B cell (primary cell): ENCODE measurements at regions of chr11 and their contacts with region 1.

Region 1: DNA sequence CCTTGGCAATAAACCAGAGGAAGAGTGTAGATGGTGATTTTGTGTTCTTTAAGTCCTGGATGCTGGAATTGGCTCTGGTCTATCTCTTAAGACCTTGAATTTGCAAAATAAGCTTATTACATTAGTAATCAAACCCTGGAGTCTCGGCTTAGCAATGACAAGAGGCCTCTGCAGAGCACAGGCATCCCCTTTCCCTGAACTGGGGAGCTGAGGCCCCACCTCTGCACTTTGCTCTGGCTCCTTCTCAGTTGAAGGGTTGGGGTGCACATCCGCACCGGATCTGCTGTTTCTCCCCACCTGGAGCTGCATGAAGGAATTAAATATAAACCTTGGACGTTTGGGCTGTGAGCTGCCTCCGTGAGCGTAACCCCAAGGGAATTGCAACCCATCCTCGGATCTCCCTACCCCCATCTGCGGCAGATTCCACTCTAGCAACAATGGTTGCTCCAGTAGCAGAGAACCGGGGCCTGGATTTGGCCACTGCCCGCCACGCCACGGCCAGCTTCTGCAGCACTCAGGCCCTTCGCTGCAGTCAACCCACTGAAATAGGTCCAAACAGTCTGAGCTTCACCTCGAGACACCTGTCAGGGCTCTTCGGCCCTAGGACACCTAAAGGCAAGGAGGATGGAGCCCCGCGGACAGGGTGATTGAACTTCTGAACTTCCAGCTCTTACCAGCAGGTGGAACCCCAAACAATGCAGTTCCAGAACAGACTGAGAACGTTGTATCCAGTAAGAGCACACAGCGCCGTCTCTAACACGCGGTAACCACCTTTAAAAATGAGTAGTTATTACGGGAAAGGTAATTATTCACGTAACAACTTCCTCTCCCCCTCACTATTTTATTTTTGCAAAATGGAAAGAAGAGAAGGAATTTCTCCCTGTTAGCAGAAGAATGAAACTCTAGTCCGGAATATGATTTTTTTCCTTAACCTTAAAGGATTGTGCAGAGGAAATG is 54.8 kb upstream of the CAPRIN1 start:
- DNase-seq: peak; percentile 85
- ATAC-seq: peak; percentile 98
- H3K4me3 ChIP-seq: no peak overlapping the region
- H3K4me3 Mint-ChIP-seq: peak overlapping the region; percentile 6
- H3K27ac ChIP-seq: no peak overlapping the region
- H3K27ac Mint-ChIP-seq: no peak overlapping the region
- H3K4me1 ChIP-seq: peaks cover 8 to 13% of the 10 kb centered on the region in 2 donors
- H3K4me1 Mint-ChIP-seq: peaks cover 13% of the 10 kb centered on the region
- H3K27me3 ChIP-seq: peaks cover 0 to 27% (median 13%) of the 10 kb centered on the region in 4 experiments
- H3K27me3 Mint-ChIP-seq: peaks cover 23% of the 10 kb centered on the region
- CTCF ChIP-seq: peak; percentile 85

Region 2: DNA sequence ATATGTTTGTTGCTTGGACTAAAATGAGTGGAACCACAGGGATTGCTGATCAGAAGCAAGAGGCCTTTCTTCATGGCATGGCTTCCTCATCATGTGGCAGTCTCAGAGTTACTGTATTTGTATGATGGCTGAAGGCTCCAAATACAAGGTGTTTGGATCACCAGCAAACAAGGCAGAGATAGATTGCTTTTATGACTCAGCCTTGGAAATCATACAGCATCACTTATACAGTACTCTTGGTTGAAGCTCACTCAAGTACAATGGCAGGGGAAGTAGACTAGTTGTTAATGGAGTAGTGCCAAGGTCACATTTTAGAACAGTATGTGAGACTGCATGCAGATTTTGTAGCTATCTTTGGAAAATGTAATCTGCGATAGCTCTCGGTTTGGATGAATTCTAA is 71.3 kb after region 1 on chr11:
- CTCF ChIA-PET with region 1: interaction called, 8 read pairs
- POLR2A ChIA-PET with region 1: no interaction called
- intact Hi-C with region 1: loop called (anchors 5 kb)
- DNase-seq: no peak
- ATAC-seq: no peak
- H3K4me3 ChIP-seq: no peak overlapping the region
- H3K4me3 Mint-ChIP-seq: peak overlapping the region; percentile 38
- H3K27ac ChIP-seq: peak overlapping the region; percentile 16 to 38
- H3K27ac Mint-ChIP-seq: peak overlapping the region; percentile 53
- H3K4me1 ChIP-seq: peaks cover 14 to 17% of the 10 kb centered on the region in 2 donors
- H3K4me1 Mint-ChIP-seq: peaks cover 51% of the 10 kb centered on the region
- H3K27me3 ChIP-seq: no peaks in the 10 kb centered on the region
- H3K27me3 Mint-ChIP-seq: no peaks in the 10 kb centered on the region
- CTCF ChIP-seq: no peak

Region 3: DNA sequence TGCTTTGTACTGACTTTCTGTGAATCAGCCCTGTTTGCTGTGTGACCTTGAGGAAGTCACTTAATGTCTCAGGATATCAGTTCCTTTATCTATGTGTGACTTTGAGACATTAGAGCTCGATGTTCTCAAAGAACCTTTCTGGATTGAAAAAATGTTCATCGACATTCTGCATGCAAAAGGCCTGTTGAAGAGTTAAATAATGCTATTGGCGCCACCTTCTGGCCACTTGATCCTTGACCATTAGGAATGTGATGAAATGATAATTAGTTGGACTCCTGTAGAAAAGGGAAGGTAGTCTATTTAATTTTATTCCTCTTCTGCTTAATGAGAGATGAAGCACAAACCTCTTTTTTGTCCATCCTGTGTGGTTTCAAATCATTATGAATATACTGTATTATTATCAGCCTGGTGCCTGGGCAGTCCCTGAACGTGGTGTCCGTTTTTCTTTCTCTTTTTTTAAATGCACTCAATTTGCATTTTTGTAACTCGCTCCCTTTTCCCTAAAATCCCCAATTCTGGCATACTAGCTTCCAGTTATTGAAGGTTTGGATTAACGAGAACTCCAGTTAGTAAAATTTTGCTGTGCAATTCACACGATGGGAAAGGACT is 496.1 kb after region 1 on chr11:
- CTCF ChIA-PET with region 1: interaction called, 5 read pairs
- POLR2A ChIA-PET with region 1: no interaction called
- intact Hi-C with region 1: loop called (anchors 1 kb)
- DNase-seq: peak; percentile 64
- ATAC-seq: no peak
- H3K4me3 ChIP-seq: no peak overlapping the region
- H3K4me3 Mint-ChIP-seq: no peak overlapping the region
- H3K27ac ChIP-seq: no peak overlapping the region
- H3K27ac Mint-ChIP-seq: no peak overlapping the region
- H3K4me1 ChIP-seq: no peaks in the 10 kb centered on the region
- H3K4me1 Mint-ChIP-seq: no peaks in the 10 kb centered on the region
- H3K27me3 ChIP-seq: no peaks in the 10 kb centered on the region
- H3K27me3 Mint-ChIP-seq: peaks cover 2% of the 10 kb centered on the region
- CTCF ChIP-seq: peak; percentile 76